B cell (primary cell): ENCODE measurements at regions of chr4 and their contacts with region 1.

Region 1: GRCh38 chr4:87973283-87974169 is 2.0 kb upstream of the SPP1 start:
- DNase-seq: peak; percentile 41
- ATAC-seq: peak; percentile 51
- H3K4me3 ChIP-seq: no peak overlapping the region
- H3K4me3 Mint-ChIP-seq: no peak overlapping the region
- H3K27ac ChIP-seq: no peak overlapping the region
- H3K27ac Mint-ChIP-seq: no peak overlapping the region
- H3K4me1 ChIP-seq: peaks cover 4 to 5% of the 10 kb centered on the region in 2 donors
- H3K4me1 Mint-ChIP-seq: peaks cover 7% of the 10 kb centered on the region
- H3K27me3 ChIP-seq: peaks cover 0 to 5% (median 4%) of the 10 kb centered on the region in 4 experiments
- H3K27me3 Mint-ChIP-seq: peaks cover 22% of the 10 kb centered on the region
- CTCF ChIP-seq: peak; percentile 91

Region 2: GRCh38 chr4:87848622-87849351 is 124.7 kb before region 1 on chr4:
- CTCF ChIA-PET with region 1: interaction called, 21 read pairs
- POLR2A ChIA-PET with region 1: no interaction called
- intact Hi-C with region 1: no loop called
- DNase-seq: peak; percentile 44
- ATAC-seq: no peak
- H3K4me3 ChIP-seq: peak overlapping the region in 4 of 5 experiments; percentile 14 to 48 (median 32)
- H3K4me3 Mint-ChIP-seq: peak overlapping the region; percentile 58
- H3K27ac ChIP-seq: no peak overlapping the region
- H3K27ac Mint-ChIP-seq: no peak overlapping the region
- H3K4me1 ChIP-seq: peaks cover 4 to 7% of the 10 kb centered on the region in 2 donors
- H3K4me1 Mint-ChIP-seq: peaks cover 7% of the 10 kb centered on the region
- H3K27me3 ChIP-seq: peaks cover 0 to 3% (median 0%) of the 10 kb centered on the region in 4 experiments
- H3K27me3 Mint-ChIP-seq: peaks cover 12% of the 10 kb centered on the region
- CTCF ChIP-seq: peak; percentile 66

Region 3: GRCh38 chr4:87961993-87962392 is 11.5 kb before region 1 on chr4:
- CTCF ChIA-PET with region 1: interaction called, 19 read pairs
- POLR2A ChIA-PET with region 1: no interaction called
- intact Hi-C with region 1: no loop called
- DNase-seq: no peak
- ATAC-seq: no peak
- H3K4me3 ChIP-seq: no peak overlapping the region
- H3K4me3 Mint-ChIP-seq: no peak overlapping the region
- H3K27ac ChIP-seq: no peak overlapping the region
- H3K27ac Mint-ChIP-seq: no peak overlapping the region
- H3K4me1 ChIP-seq: no peaks in the 10 kb centered on the region
- H3K4me1 Mint-ChIP-seq: no peaks in the 10 kb centered on the region
- H3K27me3 ChIP-seq: no peaks in the 10 kb centered on the region
- H3K27me3 Mint-ChIP-seq: no peaks in the 10 kb centered on the region
- CTCF ChIP-seq: no peak